Activated T-helper 2 cell treated with anti-CD3 and anti-CD28 coated beads, Interferon-gamma antibody, Interleukin-2, Interleukin-4, amounts not matched to agents 10 μg/mL and 5 μg/mL and 100 μg/mL, durations not matched to agents 14 hours and 24 hours and 36 hours (primary cell): ENCODE measurements at regions of chr10 and their contacts with region 1.

Region 1: DNA sequence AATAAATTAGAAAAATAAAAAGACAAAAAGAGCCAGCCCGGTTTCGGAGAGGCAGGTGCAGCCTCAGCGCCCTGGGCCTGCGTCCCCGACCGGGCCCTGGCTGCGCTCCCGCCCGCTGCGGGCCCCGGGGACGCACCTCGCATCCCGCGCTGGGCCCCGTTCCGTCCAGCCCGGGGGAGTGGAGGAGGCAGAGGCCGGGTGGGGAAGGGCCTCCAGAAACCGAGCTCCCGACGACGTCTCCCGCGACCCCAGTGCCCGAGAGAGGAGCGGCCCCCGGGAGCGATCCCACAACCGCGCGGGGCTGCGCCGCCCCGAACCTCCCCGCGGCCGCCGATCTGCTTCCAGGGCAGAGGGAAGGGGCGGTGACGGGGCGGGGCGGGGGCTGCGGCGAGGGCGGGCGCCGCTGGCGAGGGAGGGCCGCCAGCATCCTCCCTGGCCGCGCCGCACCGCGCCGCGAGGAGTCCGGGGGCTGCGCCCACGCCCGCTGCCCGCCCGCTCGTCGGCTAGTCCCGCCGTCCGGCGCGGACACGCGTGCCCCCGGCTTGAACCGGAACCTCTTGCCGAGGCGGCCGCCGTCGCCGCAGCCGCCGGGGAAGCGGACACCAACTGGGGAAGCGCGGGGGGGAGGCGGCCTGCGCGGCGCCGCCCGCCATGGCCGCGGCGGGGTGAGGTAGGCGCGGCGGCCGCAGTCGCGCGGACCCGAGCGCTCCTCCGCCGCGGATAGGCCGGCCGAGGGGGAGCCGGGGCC is at the start of gene CCNY:
- DNase-seq: peak; percentile 66
- H3K4me3 Mint-ChIP-seq: peak within 1 kb of the TSS; percentile 90
- H3K27ac Mint-ChIP-seq: peak within 1 kb of the TSS; percentile 89
- H3K4me1 Mint-ChIP-seq: peaks cover 53% of the 10 kb centered on the region
- H3K27me3 Mint-ChIP-seq: no peaks in the 10 kb centered on the region
- total RNA-seq, gene CCNY: 60.4 and 67.1 TPM in 2 replicates

Region 2: DNA sequence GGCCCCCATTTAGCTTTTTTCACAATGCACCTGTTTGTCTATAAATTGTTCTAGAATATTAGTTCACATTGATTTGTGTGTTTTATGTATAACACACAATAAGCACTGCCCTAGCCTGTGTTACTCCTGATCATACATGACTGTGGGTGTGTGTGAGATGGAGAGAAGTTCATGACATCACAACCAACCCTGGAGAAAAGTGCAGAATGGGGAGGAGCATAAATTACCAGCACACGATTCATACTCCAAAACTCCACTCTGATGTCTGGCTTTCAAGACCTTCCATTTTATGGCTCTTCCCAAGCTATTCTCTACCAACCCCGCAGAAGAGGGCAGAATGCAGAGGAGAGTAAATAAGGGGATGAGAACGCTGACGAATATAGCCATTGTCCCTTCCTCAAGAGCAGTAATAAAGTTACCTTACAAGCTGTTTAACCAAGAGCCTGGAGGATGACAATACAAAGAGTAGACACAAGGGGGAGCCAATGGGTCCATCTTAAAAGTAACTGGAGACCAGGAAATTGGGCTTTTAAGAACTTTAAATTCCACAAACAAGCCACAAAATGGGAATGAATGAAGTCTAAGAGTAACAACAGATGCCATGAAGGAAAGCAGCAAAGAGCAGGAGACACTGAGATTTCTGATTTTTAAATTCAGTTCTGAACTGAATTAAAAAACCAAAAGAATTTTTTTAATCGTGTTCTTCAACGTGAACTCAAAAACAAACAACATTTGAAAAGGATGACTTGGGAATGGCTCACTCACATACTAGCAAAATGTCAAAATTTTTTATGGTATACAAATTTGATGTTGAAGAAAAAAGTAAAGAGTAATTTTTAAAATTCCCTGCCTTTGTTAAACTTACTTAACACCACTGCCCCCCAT is 680.7 kb before region 1 on chr10:
- intact Hi-C with region 1: no loop called
- DNase-seq: no peak
- H3K4me3 Mint-ChIP-seq: no peak overlapping the region
- H3K27ac Mint-ChIP-seq: no peak overlapping the region
- H3K4me1 Mint-ChIP-seq: no peaks in the 10 kb centered on the region
- H3K27me3 Mint-ChIP-seq: peaks cover 8% of the 10 kb centered on the region

Region 3: DNA sequence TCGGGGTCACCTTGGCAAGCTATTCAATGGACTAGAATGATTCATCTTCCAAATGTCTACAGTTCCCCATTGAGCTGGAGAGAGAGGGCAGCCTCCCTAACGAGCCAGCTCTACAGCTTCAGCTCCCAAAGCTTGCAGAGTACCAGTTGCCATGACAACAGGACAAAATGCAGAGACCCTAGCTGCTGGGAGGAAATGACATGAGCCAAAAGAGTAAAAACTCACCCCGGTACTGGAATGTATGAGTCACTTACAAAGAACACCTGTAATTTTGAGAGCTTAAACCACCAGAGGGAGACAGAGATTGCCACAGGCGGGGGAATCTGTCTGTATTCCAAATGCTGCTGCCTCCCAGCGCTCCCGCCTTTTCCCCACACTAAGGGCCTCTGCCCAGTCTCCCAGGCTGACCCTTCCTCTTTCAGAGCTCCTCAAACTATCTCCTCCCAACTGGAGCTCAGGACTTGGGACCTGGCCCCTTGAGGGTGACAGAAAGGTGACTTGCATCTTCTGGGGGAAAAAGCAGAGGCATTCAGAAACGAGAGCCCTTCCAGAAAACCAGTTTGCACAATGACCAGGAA is 341.6 kb before region 1 on chr10:
- intact Hi-C with region 1: loop called (anchors 10 kb)
- DNase-seq: peak; percentile 58
- H3K4me3 Mint-ChIP-seq: no peak overlapping the region
- H3K27ac Mint-ChIP-seq: peak overlapping the region; percentile 28
- H3K4me1 Mint-ChIP-seq: peaks cover 12% of the 10 kb centered on the region
- H3K27me3 Mint-ChIP-seq: no peaks in the 10 kb centered on the region

Region 4: DNA sequence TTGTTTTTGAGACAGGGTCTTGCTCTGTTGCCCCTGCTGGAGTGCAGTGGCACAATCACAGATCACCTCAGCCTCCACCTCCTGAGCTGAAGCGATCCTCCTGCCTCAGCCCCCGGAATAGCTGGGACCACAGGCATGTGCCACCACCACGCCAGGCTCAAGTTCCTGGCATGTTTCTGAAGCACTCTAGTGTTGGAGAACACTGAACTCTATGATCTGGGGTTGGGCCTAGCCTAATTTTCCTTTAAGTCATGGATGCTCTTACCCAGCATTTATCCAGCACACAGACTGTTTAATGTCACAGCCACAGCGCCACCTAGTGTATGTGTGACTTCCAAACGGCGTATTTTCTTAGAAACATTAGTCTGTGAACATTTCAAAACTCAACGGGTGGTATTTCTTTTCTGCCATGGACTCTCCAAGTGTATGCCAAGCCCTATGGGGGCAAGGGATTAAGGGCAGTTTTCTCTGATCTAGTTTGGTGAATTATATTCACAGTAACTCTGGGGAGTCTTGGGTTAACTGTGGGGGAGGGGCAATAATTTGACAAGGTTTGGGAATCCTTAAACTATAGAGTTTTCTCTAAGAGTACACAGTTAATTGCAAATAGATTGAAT is 117.8 kb before region 1 on chr10:
- intact Hi-C with region 1: loop called (anchors 2 kb)
- DNase-seq: peak; percentile 78
- H3K4me3 Mint-ChIP-seq: peak overlapping the region; percentile 66
- H3K27ac Mint-ChIP-seq: peak overlapping the region; percentile 97
- H3K4me1 Mint-ChIP-seq: peaks cover 62% of the 10 kb centered on the region
- H3K27me3 Mint-ChIP-seq: no peaks in the 10 kb centered on the region

Region 5: DNA sequence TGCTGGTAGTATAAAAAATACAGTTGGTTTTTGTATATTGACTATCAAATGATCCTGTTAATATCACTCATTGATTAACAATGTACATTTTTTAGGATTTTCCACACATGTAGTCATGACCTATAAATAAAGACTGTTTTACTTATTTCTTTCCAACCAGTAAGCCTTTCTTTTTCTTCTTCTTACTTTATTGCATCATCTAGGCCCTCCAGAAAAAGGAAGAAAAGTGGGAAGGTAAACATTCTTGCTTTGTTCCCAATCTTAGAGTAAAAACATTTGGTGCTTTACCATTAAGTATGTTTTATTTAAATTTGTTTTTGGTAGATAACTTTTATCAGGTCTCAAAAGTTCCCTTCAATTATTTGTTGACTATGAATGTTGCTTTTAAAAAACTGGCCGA is 47.1 kb before region 1 on chr10:
- intact Hi-C with region 1: no loop called
- DNase-seq: no peak
- H3K4me3 Mint-ChIP-seq: no peak overlapping the region
- H3K27ac Mint-ChIP-seq: no peak overlapping the region
- H3K4me1 Mint-ChIP-seq: no peaks in the 10 kb centered on the region
- H3K27me3 Mint-ChIP-seq: peaks cover 10% of the 10 kb centered on the region

Region 6: DNA sequence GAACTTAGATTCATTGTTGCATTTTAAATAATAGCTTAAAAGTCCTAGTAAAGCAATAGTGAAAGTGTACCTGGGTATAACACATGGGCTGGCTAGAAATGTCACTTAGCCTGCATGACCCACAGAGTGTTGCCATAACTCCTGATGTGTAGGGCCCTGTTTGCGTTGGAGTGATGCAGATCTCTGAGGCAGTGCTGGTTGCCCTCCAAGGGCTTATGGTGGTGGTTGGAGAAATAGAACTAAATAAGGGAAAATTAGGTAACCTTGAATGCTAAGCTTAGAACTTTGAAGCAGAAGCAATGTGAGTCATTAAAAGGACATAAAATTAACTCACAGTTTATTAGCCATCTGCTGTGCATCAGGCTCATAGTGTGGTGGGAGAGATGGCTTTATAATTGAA is 105.8 kb after region 1 on chr10:
- intact Hi-C with region 1: loop called (anchors 2 kb)
- DNase-seq: no peak
- H3K4me3 Mint-ChIP-seq: no peak overlapping the region
- H3K27ac Mint-ChIP-seq: peak overlapping the region; percentile 87
- H3K4me1 Mint-ChIP-seq: peaks cover 32% of the 10 kb centered on the region
- H3K27me3 Mint-ChIP-seq: no peaks in the 10 kb centered on the region

Region 7: GRCh38 chr10:35635576-35635975 is 299.3 kb after region 1 on chr10:
- intact Hi-C with region 1: loop called (anchors 10 kb)
- DNase-seq: no peak
- H3K4me3 Mint-ChIP-seq: no peak overlapping the region
- H3K27ac Mint-ChIP-seq: no peak overlapping the region
- H3K4me1 Mint-ChIP-seq: peaks cover 5% of the 10 kb centered on the region
- H3K27me3 Mint-ChIP-seq: peaks cover 33% of the 10 kb centered on the region